Cardiac septum (tissue), 1 donor: ENCODE measurements at regions of chr2 and their contacts with region 1.

Region 1: GRCh38 chr2:152717228-152718075 is at the start of gene PRPF40A:
- DNase-seq: peak; percentile 99
- total RNA-seq, gene PRPF40A: 36.3 TPM

Region 2: GRCh38 chr2:152175458-152176325 is 541.8 kb before region 1 on chr2 and contains the start of gene STAM2:
- intact Hi-C with region 1: loop called (anchors 5 kb)
- DNase-seq: peak; percentile 98
- total RNA-seq, gene STAM2: 28.9 TPM

Region 3: GRCh38 chr2:152376385-152376784 is 341.1 kb before region 1 on chr2:
- intact Hi-C with region 1: no loop called
- DNase-seq: no peak